ENCODE measurements at regions of chr9 and their contacts with region 1.

Region 1: DNA sequence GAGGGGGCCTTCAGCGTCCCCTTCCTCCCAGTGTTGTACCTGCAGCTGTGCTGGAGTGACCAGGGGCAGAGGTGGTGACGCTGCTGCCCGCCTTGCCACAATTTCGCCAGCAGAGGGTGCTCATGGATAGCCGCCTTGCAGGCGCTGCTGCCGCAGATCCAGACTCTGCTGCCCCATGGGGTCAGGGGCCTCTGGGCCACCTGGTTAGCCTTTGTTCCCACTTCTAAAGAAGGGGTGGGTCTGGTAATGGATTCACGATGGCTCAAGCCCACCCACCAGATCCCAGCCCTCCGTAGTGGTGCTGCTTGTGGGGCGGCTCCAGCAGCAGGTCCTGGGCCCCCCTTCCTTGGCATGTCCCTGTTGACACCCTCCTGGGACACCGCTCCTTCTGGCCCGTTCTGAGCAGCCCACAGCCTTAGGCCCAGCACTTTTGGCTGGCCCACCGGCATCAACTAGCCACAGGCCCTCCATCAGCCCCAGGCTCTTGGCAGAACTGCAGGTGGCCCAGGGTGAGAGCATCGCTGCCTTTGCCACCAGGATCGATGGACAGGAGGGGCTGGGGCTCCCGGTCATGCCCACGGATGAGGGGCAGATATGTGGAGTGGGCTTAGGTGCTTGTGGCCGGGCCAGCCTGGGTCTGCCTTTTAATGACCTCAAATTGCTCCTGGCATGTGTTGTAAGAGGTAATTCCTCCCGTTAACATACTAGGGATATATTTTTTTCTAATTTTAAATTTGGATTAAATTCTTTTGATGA is 57.2 kb downstream of the COL5A1 start:
- DNase-seq: peak; percentile 39 to 78 (median 68)
- H3K4me3 ChIP-seq: no peak overlapping the region
- H3K27ac ChIP-seq: no peak overlapping the region
- H3K4me1 ChIP-seq: no peaks in the 10 kb centered on the region
- H3K27me3 ChIP-seq: no peaks in the 10 kb centered on the region
- CTCF ChIP-seq: peak; percentile 84 to 90 (median 88)
- POLR2A ChIP-seq: no peak

Region 2: DNA sequence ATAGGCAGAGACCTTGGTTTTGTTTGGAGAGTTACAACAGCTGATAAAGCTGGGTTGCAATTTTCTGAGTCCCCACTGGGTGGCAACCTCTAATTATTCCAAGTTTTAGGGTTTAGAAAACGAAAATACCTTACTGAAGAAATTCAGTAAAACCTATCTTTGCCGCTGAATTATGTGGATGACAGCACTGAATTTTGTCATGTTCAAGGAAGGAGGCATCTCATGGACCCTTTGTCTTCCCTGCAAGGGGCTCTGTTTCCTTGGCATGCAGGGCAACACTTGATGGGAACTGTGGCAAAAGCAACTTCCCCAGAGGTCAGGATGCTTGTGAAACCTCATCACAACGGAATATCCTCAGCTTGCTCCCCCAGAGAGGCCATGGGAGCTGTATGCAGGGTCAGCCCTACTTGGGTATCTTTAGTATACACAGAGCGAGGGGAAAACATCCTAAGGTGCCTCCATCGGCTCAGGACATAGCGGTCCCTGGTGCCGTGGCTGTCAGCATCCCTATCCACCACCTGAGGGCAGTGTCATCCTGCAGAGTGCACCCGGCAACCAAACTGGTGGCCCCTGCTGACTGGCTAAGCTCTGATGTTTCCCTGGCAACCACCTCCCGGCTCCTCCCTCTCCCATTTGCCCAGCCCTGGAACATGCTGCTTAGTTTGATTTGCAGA is 249.4 kb before region 1 on chr9:
- intact Hi-C with region 1: loop called in 1 of 2 experiments (anchors 2 kb)
- DNase-seq: peak; percentile 90 to 98 (median 96)
- H3K4me3 ChIP-seq: no peak overlapping the region
- H3K27ac ChIP-seq: no peak overlapping the region
- H3K4me1 ChIP-seq: no peaks in the 10 kb centered on the region
- H3K27me3 ChIP-seq: no peaks in the 10 kb centered on the region
- CTCF ChIP-seq: peak; percentile 74 to 97 (median 93)
- POLR2A ChIP-seq: no peak

Region 3: GRCh38 chr9:134983074-134983473 is 284.3 kb after region 1 on chr9:
- intact Hi-C with region 1: loop called in 1 of 2 experiments (anchors 5 kb)
- DNase-seq: peak in 5 of 7 donors; percentile 36 to 66 (median 44)
- H3K4me3 ChIP-seq: no peak overlapping the region
- H3K27ac ChIP-seq: no peak overlapping the region
- H3K4me1 ChIP-seq: no peaks in the 10 kb centered on the region
- H3K27me3 ChIP-seq: no peaks in the 10 kb centered on the region
- CTCF ChIP-seq: peak; percentile 14 to 63 (median 44)
- POLR2A ChIP-seq: no peak

Region 4: DNA sequence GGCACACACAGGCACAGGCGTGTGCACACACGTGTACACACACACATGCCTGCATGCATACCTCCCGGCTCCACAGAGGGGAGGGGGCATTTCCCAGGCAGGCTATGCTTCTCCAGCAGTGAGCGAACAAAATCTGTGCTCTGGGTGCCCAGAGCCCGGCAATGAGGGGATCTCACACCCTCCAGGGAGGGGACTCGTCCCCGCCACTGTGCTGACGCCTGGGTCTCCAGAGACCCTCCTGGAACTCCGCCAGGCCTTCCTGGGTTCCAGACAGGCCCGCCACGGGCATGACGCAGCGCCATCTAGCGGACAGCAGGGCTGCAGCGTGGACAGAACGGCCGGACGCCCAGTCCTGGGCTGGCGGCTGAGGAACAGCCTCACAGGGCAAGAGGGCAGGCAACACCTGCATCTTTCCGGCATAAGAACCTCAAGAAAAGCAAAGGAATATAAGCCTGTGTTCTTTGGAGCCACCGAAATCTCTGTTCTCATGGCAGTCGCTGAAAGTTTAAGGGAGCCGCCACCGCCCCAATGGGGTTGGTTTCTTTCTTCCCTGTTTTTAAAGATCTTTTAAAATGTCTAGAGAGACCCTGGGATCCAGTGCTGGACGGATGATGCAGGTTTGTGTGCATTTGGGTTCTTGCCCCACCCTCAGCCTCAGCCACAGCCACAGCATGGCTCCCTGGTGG is 645.2 kb after region 1 on chr9:
- intact Hi-C with region 1: loop called in 1 of 2 experiments (anchors 10 kb)
- DNase-seq: peak; percentile 48 to 77 (median 69)
- H3K4me3 ChIP-seq: no peak overlapping the region
- H3K27ac ChIP-seq: no peak overlapping the region
- H3K4me1 ChIP-seq: no peaks in the 10 kb centered on the region
- H3K27me3 ChIP-seq: peaks cover 5% of the 10 kb centered on the region
- CTCF ChIP-seq: peak; percentile 77 to 95 (median 86)
- POLR2A ChIP-seq: no peak

Measured in adrenal gland (tissue), 19 donors.